ENCODE measurements at regions of chr16 and their contacts with region 1.

Region 1: DNA sequence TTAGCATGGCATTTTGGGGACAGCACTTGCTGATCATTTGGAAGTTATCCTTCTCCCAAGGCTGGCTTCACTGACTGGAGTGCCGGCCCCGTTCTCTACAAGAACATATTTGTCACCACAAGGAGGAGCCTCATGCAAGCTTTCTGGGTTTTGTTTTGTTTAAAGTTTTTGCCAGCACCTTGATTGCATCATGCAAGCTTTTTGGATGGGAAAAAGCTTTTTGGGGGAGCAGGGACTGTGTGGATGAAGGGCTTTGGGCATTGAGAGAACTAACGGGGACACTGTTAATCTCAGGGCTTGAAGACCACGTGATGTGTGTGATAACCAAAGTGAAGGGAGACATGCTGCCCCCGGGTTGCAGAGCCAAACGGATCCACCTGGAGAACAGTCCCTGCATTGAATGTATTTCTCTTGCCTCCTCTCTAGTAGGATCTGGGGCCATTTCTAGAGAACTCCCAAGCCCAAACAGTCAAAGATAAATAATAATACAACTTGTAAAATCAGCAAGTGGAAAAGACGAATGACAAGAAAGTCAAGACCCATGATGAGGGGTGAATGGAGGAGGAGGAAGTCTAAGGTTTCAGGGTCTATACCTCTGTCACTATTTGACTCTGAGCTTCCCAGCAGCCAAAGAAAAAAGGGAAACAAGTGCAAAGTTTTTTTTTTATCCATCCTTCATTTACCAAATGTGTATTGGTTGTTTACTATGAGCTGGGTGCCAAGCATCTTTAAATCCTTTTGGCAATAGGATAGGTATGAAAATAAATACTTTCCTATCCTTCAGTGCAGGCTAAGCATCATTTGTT is 17.2 kb downstream of the TMEM114 start:
- DNase-seq: peak; percentile 39
- CTCF ChIP-seq: peak; percentile 21

Region 2: GRCh38 chr16:8342276-8342675 is 230.8 kb before region 1 on chr16:
- in situ Hi-C with region 1: no loop called
- DNase-seq: no peak
- CTCF ChIP-seq: no peak

Region 3: GRCh38 chr16:8474587-8474986 is 98.5 kb before region 1 on chr16:
- in situ Hi-C with region 1: no loop called
- DNase-seq: no peak
- CTCF ChIP-seq: no peak

Region 4: DNA sequence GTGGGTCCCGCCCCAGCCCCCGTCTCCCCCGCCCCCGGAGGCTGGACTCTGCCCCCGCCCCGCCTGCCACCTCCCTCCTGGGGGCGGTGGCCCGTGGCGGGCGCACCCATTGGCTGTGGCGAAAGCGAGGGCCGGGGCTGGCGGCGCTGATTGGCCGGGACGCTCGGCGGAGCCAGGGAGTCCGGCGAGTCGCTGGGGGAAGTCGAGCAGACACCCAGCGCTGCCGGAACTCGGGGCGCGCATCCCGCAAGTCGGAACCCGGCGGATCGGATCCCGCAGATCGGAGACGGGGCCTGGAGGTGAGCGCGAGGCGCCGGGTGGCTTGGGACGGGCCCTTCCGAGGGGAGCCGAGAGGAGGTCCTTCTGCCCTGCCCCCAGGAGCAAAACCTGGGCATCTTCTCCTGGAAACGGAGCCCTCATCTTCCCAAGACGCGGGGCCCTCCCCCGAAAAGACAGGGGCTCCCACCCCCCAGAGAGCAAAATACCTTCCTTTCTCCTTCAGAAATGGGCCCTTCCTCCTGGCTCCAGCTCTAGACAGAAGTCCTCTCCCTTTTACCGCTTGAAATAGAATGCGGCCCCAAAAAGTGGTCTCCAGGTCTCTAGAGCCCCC is 101.4 kb after region 1 on chr16 and contains the start of gene ABAT:
- in situ Hi-C with region 1: no loop called
- DNase-seq: peak; percentile 99
- CTCF ChIP-seq: no peak

Region 5: GRCh38 chr16:8797364-8798173 is 224.4 kb after region 1 on chr16 and contains the starts of genes PMM2 and TMEM186:
- in situ Hi-C with region 1: loop called (anchors 10 kb)
- DNase-seq: peak; percentile 99
- CTCF ChIP-seq: no peak

Region 6: GRCh38 chr16:8878521-8878911 is 305.4 kb after region 1 on chr16:
- in situ Hi-C with region 1: loop called (anchors 10 kb)
- DNase-seq: no peak
- CTCF ChIP-seq: no peak